HCT116 (cell line): ENCODE measurements at regions of chr7 and their contacts with region 1.

Region 1: GRCh38 chr7:41003031-41003925 is 699.6 kb downstream of the INHBA start:
- DNase-seq: peak; percentile 54
- ATAC-seq: peak; percentile 63
- H3K4me3 ChIP-seq: no peak overlapping the region
- H3K27ac ChIP-seq: no peak overlapping the region
- H3K4me1 ChIP-seq: peaks cover 16 to 39% of the 10 kb centered on the region in 2 experiments
- H3K27me3 ChIP-seq: no peaks in the 10 kb centered on the region
- CTCF ChIP-seq: peak; percentile 35 to 94 (median 75); a peak in 5 of 6 replicates
- POLR2A ChIP-seq: no peak
- RAD21 ChIP-seq: peak; percentile 56

Region 2: DNA sequence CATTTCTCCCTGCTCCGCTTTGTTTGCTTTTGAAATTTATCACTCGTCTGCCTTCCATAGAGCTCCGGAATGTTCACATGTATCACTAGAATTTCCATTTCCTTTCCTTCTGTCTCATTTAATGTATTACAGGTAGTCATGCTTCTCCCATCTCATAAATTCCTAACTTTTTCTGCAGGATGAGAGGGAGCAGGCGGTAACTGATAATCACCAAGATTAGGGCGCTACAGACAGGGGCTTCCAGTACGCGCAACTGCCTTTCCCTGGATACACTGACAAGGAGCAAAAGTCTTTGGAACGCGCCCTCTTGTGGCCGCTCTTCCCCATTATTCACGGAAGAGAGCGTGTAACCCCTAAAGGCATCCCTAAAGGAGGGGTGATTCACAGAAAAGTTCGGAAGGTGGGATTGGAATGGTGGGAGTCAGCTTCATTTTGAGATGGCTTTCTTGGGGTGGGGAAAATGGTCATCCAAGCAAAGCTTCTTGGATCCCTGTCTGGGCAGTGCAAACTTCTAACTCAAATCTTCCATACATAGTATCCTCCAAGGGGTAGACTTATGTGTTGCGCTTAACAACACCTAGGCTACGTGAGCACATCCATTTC is 693.1 kb after region 1 on chr7:
- CTCF ChIA-PET with region 1: interaction called, 4 read pairs
- POLR2A ChIA-PET with region 1: no interaction called
- RAD21 ChIA-PET with region 1: no interaction called
- intact Hi-C with region 1: loop called (anchors 5 kb)
- DNase-seq: peak; percentile 39
- ATAC-seq: peak; percentile 90
- H3K4me3 ChIP-seq: no peak overlapping the region
- H3K27ac ChIP-seq: no peak overlapping the region
- H3K4me1 ChIP-seq: no peaks in the 10 kb centered on the region; a peak in 1 of 4 replicates
- H3K27me3 ChIP-seq: no peaks in the 10 kb centered on the region
- CTCF ChIP-seq: peak; percentile 30 to 75 (median 60); a peak in 5 of 6 replicates
- POLR2A ChIP-seq: no peak
- RAD21 ChIP-seq: peak; percentile 63

Region 3: GRCh38 chr7:41705109-41705901 is 702.0 kb after region 1 on chr7:
- CTCF ChIA-PET with region 1: interaction called, 14 read pairs
- POLR2A ChIA-PET with region 1: no interaction called
- RAD21 ChIA-PET with region 1: no interaction called
- intact Hi-C with region 1: no loop called
- DNase-seq: no peak
- ATAC-seq: peak; percentile 98
- H3K4me3 ChIP-seq: peak overlapping the region; percentile 41 to 52
- H3K27ac ChIP-seq: no peak overlapping the region; the same call in 1 of the 2 replicates
- H3K4me1 ChIP-seq: peaks cover 2 to 7% of the 10 kb centered on the region in 2 experiments; a peak in 2 of 4 replicates
- H3K27me3 ChIP-seq: no peaks in the 10 kb centered on the region
- CTCF ChIP-seq: peak; percentile 45 to 59 (median 57); a peak in 5 of 6 replicates
- POLR2A ChIP-seq: no peak
- RAD21 ChIP-seq: peak; percentile 78